Activated B cell treated with CpG ODN at 0.5 μM for 24 hours (primary cell): ENCODE measurements at regions of chr6 and their contacts with region 1.

Region 1: DNA sequence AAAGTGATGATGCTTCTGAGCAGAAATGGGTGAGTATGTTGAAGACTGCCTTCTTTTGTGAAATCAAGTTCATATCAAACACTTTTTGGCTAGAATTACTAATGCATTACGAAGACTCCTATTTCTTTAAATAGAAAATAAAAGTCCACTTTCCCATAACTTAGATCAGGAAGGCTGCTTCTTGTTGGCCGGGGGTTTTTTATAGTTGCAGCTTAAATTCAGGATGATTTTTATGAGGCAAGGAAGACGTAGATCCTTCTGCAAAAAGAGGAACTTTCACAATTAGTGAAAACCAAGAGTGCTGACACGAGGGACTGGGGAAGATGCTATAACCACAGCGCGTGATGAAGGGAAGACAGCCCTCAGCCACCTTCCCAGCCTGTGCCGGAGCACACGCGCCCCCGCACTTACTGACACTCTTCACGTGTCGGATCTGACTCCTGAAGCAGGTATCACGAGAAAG is 206.1 kb upstream of the PRDM1 start:
- DNase-seq: no peak
- ATAC-seq: peak; percentile 63
- H3K4me3 Mint-ChIP-seq: peak overlapping the region; percentile 52
- H3K27ac Mint-ChIP-seq: peak overlapping the region; percentile 61
- H3K4me1 Mint-ChIP-seq: peaks cover 66% of the 10 kb centered on the region
- H3K27me3 Mint-ChIP-seq: no peaks in the 10 kb centered on the region
- CTCF ChIP-seq: no peak

Region 2: GRCh38 chr6:105862936-105863607 is 17.0 kb before region 1 on chr6:
- CTCF ChIA-PET with region 1: no interaction called
- POLR2A ChIA-PET with region 1: interaction called, 3 read pairs
- intact Hi-C with region 1: loop called (anchors 2 kb)
- DNase-seq: no peak
- ATAC-seq: peak; percentile 80
- H3K4me3 Mint-ChIP-seq: peak overlapping the region; percentile 24
- H3K27ac Mint-ChIP-seq: peak overlapping the region; percentile 68
- H3K4me1 Mint-ChIP-seq: peaks cover 38% of the 10 kb centered on the region
- H3K27me3 Mint-ChIP-seq: no peaks in the 10 kb centered on the region
- CTCF ChIP-seq: no peak

Region 3: DNA sequence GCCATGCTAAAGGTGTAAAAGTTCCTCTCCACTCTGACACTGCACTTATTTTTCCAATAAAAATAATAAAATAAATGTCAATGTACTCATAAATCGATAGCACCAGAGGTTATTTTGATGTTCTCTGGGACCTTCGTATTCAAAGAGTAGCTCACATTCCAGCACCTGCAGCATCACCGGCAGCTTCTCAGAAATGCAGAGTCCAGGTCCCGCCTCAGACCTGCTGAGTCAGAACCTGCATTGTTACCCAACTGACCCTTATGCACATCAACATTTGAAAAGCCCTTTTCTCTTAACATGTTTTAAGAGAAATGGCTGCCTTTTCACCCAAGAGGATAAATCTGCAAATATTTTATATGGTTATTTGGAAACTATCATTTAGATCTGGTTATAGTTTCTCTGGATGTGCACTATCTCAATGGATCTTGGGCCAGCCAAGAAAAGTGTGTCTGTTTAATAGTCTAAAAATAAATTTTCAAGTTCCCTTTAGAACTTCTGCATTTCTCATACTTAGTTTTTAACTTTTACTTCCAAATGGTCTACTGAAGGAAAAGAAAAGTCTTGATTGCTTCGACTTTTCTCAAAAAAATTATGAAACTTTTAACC is 10.1 kb before region 1 on chr6:
- CTCF ChIA-PET with region 1: no interaction called
- POLR2A ChIA-PET with region 1: interaction called, 3 read pairs
- intact Hi-C with region 1: loop called (anchors 2 kb)
- DNase-seq: no peak
- ATAC-seq: no peak
- H3K4me3 Mint-ChIP-seq: no peak overlapping the region
- H3K27ac Mint-ChIP-seq: no peak overlapping the region
- H3K4me1 Mint-ChIP-seq: peaks cover 56% of the 10 kb centered on the region
- H3K27me3 Mint-ChIP-seq: peaks cover 3% of the 10 kb centered on the region
- CTCF ChIP-seq: no peak

Region 4: DNA sequence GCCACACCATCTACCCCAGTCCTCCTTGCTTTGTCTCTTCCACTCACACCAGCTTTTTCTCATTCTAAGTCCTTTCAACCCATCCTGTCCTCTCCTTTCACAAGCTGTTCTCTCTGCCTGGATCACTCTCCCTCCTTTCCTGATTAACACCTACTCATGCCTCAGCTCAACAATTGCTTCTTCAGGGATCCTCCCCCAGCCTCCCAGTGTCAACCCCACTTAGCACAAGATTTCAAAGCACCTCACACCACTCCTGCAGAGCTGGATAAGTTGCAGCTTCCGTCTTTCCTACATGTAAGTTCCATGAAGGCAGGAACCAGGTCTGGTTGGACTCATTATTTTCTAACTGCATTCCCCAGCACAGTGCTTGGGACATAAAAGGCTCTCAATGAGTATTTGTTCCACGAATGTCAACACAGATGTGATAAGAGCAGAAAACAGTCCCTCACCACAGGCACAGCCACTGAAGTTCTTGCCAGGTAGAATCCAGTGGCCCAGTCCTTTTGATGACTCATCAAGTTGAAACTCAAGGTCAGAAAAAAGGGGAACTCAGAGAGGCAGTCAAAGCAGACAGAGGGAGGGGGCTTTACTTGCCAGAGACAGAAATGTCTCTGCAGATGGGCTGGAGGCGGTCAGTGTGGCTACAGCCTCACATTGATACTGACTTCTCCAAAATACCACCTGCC is 12.7 kb after region 1 on chr6:
- CTCF ChIA-PET with region 1: no interaction called
- POLR2A ChIA-PET with region 1: interaction called, 5 read pairs
- intact Hi-C with region 1: loop called (anchors 1 kb)
- DNase-seq: no peak
- ATAC-seq: peak; percentile 91
- H3K4me3 Mint-ChIP-seq: peak overlapping the region; percentile 15
- H3K27ac Mint-ChIP-seq: peak overlapping the region; percentile 68
- H3K4me1 Mint-ChIP-seq: peaks cover 18% of the 10 kb centered on the region
- H3K27me3 Mint-ChIP-seq: no peaks in the 10 kb centered on the region
- CTCF ChIP-seq: no peak

Region 5: GRCh38 chr6:105898286-105898685 is 18.2 kb after region 1 on chr6:
- CTCF ChIA-PET with region 1: no interaction called
- POLR2A ChIA-PET with region 1: interaction called, 3 read pairs
- intact Hi-C with region 1: loop called (anchors 2 kb)
- DNase-seq: no peak
- ATAC-seq: peak; percentile 28
- H3K4me3 Mint-ChIP-seq: no peak overlapping the region
- H3K27ac Mint-ChIP-seq: no peak overlapping the region
- H3K4me1 Mint-ChIP-seq: peaks cover 18% of the 10 kb centered on the region
- H3K27me3 Mint-ChIP-seq: peaks cover 6% of the 10 kb centered on the region
- CTCF ChIP-seq: no peak